ENCODE measurements at regions of chr2 and their contacts with region 1.

Region 1: GRCh38 chr2:26942543-26943295 is 27.7 kb upstream of the MAPRE3 start:
- DNase-seq: no peak
- H3K4me3 ChIP-seq: no peak overlapping the region
- H3K27ac ChIP-seq: no peak overlapping the region
- H3K27me3 ChIP-seq: peaks cover 40% of the 10 kb centered on the region
- CTCF ChIP-seq: peak; percentile 77

Region 2: GRCh38 chr2:26785431-26786206 is 157.1 kb before region 1 on chr2 and contains the start of gene CENPA:
- CTCF ChIA-PET with region 1: no interaction called
- POLR2A ChIA-PET with region 1: no interaction called
- DNase-seq: peak; percentile 99
- H3K4me3 ChIP-seq: peak within 1 kb of the TSS; percentile 76
- H3K27ac ChIP-seq: peak within 1 kb of the TSS; percentile 58
- H3K27me3 ChIP-seq: no peaks in the 10 kb centered on the region
- CTCF ChIP-seq: peak; percentile 25
- polyA plus RNA-seq, gene CENPA: 6.8 and 9.3 TPM in 2 replicates

Region 3: GRCh38 chr2:26954135-26954534 is 11.4 kb after region 1 on chr2:
- CTCF ChIA-PET with region 1: interaction called, 12 read pairs
- POLR2A ChIA-PET with region 1: no interaction called
- DNase-seq: no peak
- H3K4me3 ChIP-seq: no peak overlapping the region
- H3K27ac ChIP-seq: no peak overlapping the region
- H3K27me3 ChIP-seq: peaks cover 38% of the 10 kb centered on the region
- CTCF ChIP-seq: no peak

Region 4: DNA sequence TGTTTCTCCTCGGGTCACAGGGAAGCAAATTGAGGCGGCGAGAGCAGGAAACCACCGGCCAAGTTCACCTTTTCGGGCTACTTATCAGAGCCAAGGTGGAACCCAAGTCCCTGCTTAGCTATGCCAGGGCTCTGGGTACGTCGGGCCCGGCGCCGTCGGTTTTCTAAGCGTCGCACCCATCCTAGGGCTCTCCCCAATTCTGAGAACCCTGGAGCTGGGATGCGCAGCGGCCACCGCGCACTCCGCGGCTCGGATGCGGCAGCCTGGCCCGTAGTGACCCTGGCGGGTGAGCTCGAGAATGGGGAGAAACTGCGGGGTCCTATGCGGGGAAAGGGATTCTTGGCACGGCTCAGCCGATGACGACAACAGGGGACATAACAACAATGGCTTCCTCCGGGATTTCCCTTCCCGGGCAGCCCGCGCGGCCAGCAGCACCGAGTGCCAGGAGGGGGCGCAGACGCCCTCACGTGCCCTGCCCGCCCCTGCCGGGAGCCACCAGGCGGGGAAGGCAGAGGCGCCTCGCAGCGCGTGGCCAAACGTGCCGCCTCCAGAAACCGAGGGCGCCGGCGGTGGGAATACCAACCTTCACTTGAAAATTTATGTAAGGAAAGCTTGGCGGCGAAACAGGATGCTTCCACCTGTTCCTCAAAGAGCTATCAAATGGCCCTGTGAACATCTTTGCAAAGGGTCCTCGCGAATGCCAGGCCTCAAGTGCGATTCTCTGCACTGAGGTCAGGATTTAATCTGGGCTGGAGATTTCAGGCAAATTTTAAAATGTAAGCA is 322.2 kb after region 1 on chr2:
- CTCF ChIA-PET with region 1: no interaction called
- POLR2A ChIA-PET with region 1: no interaction called
- DNase-seq: no peak
- H3K4me3 ChIP-seq: peak overlapping the region; percentile 45
- H3K27ac ChIP-seq: no peak overlapping the region
- H3K27me3 ChIP-seq: peaks cover 69% of the 10 kb centered on the region
- CTCF ChIP-seq: peak; percentile 60